ENCODE measurements at regions of chr16 and their contacts with region 1.

Region 1: GRCh38 chr16:21565861-21566669 is 33.3 kb upstream of the METTL9 start:
- DNase-seq: no peak
- ATAC-seq: no peak
- H3K4me3 Mint-ChIP-seq: no peak overlapping the region
- H3K27ac Mint-ChIP-seq: no peak overlapping the region
- H3K4me1 Mint-ChIP-seq: no peaks in the 10 kb centered on the region
- H3K27me3 Mint-ChIP-seq: peaks cover 1% of the 10 kb centered on the region

Region 2: DNA sequence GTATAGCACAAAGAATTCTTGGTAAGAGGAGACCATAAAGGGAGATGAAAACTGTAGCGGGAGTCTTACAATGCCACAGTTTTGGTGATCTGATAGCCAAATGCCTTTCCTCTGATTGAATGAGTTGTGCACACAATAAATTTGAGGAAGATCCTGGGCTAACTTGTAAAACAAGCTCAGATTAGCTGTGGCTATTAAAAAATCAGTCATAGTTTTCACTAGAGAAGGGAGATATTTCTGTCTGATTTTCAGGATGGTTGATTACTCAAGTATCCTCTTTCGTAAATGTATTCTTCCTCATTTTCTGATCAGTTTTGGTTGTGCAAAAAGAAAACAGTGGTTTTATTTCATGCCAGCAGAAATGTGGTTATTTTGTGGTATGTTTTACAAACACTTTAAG is 24.2 kb after region 1 on chr16:
- CTCF ChIA-PET with region 1: no interaction called
- POLR2A ChIA-PET with region 1: no interaction called
- intact Hi-C with region 1: no loop called
- DNase-seq: no peak
- ATAC-seq: no peak
- H3K4me3 Mint-ChIP-seq: no peak overlapping the region
- H3K27ac Mint-ChIP-seq: no peak overlapping the region
- H3K4me1 Mint-ChIP-seq: no peaks in the 10 kb centered on the region
- H3K27me3 Mint-ChIP-seq: no peaks in the 10 kb centered on the region

Region 3: DNA sequence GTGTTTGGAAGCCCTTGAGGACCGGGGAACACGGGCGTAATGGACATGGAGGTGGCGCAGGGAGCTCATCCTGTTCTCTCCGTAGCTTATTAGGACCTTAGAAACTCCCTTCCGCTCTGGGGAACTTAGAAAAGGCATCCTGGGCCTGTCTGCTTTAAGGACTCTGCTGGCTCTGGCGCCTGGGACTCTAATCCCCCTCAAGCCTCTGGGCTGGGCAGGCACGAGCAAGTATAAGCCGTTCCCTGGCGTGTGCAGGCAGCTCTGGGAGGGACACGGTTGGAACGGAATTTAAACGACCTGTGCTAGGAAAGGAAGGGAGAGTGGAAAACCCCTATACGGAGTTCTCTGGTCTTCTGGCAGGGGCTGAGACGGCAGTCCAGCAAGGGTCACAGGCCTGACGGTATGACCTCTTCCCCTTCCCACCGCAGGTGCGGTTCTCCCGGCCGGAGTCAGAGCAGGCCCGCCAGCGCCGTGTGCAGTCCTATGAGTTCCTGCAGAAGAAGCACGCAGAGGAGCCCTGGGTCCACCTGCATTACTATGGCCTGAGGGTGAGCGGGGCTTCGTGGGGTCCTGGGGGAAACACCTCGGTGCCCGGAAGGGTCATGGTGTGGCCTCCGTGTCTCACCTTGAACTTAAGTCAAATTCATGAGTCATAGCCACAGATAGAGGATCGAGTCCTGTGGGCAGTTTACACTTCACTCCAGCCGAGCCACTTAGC is 748.8 kb after region 1 on chr16:
- CTCF ChIA-PET with region 1: no interaction called
- POLR2A ChIA-PET with region 1: no interaction called
- intact Hi-C with region 1: loop called in 1 of 2 experiments (anchors 5 kb)
- DNase-seq: no peak
- ATAC-seq: no peak
- H3K4me3 Mint-ChIP-seq: no peak overlapping the region
- H3K27ac Mint-ChIP-seq: no peak overlapping the region
- H3K4me1 Mint-ChIP-seq: no peaks in the 10 kb centered on the region
- H3K27me3 Mint-ChIP-seq: no peaks in the 10 kb centered on the region

Measured in activated CD4-positive, alpha-beta T cell treated with anti-CD3 and anti-CD28 coated beads for 36 hours (primary cell).